ENCODE measurements at regions of chr1 and their contacts with region 1.

Region 1: GRCh38 chr1:160437432-160438316 is 37.3 kb downstream of the VANGL2 start:
- DNase-seq: peak in 4 of 9 experiments; percentile 14 to 81 (median 62)
- ATAC-seq: peak; percentile 82
- H3K4me3 ChIP-seq: peak overlapping the region; percentile 43 to 49
- H3K4me3 Mint-ChIP-seq: peak overlapping the region; percentile 78
- H3K27ac ChIP-seq: peak overlapping the region; percentile 59 to 96
- H3K27ac Mint-ChIP-seq: peak overlapping the region; percentile 98
- H3K4me1 ChIP-seq: peaks cover 22% of the 10 kb centered on the region
- H3K4me1 Mint-ChIP-seq: peaks cover 43% of the 10 kb centered on the region
- H3K27me3 ChIP-seq: no peaks in the 10 kb centered on the region
- H3K27me3 Mint-ChIP-seq: no peaks in the 10 kb centered on the region
- CTCF ChIP-seq: no peak

Region 2: GRCh38 chr1:158972841-158973240 is 1464.8 kb before region 1 on chr1:
- CTCF ChIA-PET with region 1: no interaction called
- POLR2A ChIA-PET with region 1: no interaction called
- intact Hi-C with region 1: no loop called
- DNase-seq: peak in 2 of 9 experiments; percentile 31 to 47
- ATAC-seq: no peak
- H3K4me3 ChIP-seq: no peak overlapping the region
- H3K4me3 Mint-ChIP-seq: no peak overlapping the region
- H3K27ac ChIP-seq: peak overlapping the region in 1 of 2 experiments; percentile 1
- H3K27ac Mint-ChIP-seq: no peak overlapping the region
- H3K4me1 ChIP-seq: no peaks in the 10 kb centered on the region
- H3K4me1 Mint-ChIP-seq: peaks cover 3% of the 10 kb centered on the region
- H3K27me3 ChIP-seq: no peaks in the 10 kb centered on the region
- H3K27me3 Mint-ChIP-seq: no peaks in the 10 kb centered on the region
- CTCF ChIP-seq: no peak

Region 3: GRCh38 chr1:160460683-160461287 is 23.1 kb after region 1 on chr1:
- CTCF ChIA-PET with region 1: no interaction called
- POLR2A ChIA-PET with region 1: no interaction called
- intact Hi-C with region 1: loop called in 1 of 2 experiments (anchors 2 kb)
- DNase-seq: peak in 1 of 9 experiments; percentile 33
- ATAC-seq: peak; percentile 14
- H3K4me3 ChIP-seq: no peak overlapping the region
- H3K4me3 Mint-ChIP-seq: peak overlapping the region; percentile 54
- H3K27ac ChIP-seq: peak overlapping the region in 1 of 2 experiments; percentile 40
- H3K27ac Mint-ChIP-seq: peak overlapping the region; percentile 82
- H3K4me1 ChIP-seq: peaks cover 14% of the 10 kb centered on the region
- H3K4me1 Mint-ChIP-seq: peaks cover 47% of the 10 kb centered on the region
- H3K27me3 ChIP-seq: no peaks in the 10 kb centered on the region
- H3K27me3 Mint-ChIP-seq: no peaks in the 10 kb centered on the region
- CTCF ChIP-seq: no peak

Region 4: DNA sequence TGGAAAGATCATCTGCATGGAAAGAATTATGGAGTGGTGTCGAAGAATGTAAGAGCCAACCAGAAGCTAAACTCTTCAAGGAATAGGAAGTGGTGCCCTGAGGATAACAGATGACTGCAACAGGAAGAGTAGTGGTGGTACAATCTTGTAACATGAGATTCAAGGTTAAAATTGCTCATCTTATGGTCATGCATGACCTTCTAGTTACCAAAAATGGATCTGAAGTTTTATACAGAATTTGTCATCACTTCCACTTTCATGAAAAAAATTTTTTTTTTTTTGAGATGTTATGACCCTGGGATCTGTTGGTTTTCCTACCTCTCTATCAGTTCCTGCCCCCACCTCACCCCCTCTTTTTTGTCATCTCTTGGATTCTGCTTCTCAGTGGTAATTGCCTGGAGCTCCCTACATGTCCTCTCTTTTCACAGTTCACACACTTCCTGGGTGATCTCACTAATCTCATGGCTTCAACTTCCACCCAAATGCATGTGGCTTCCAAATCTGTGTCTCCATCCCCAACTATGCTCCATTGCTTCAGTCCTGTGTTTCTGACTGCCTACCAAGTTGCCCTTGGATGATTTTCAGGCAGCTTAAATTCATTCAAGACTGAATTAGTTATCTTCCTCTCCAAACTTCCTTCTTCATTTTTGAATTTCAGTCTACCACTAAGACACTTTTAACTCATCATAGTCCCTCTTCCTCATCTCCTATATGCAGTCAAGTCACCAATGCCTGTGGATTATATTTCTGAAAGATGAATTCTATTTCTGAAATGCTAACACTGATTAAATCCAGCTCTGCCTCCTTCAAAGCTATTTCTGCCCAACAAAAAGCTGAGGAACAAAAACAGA is 36.9 kb after region 1 on chr1:
- CTCF ChIA-PET with region 1: interaction called, 3 read pairs
- POLR2A ChIA-PET with region 1: no interaction called
- intact Hi-C with region 1: loop called in 1 of 2 experiments (anchors 5 kb)
- DNase-seq: no peak
- ATAC-seq: peak; percentile 20
- H3K4me3 ChIP-seq: no peak overlapping the region
- H3K4me3 Mint-ChIP-seq: no peak overlapping the region
- H3K27ac ChIP-seq: no peak overlapping the region
- H3K27ac Mint-ChIP-seq: no peak overlapping the region
- H3K4me1 ChIP-seq: peaks cover 18% of the 10 kb centered on the region
- H3K4me1 Mint-ChIP-seq: peaks cover 7% of the 10 kb centered on the region
- H3K27me3 ChIP-seq: no peaks in the 10 kb centered on the region
- H3K27me3 Mint-ChIP-seq: no peaks in the 10 kb centered on the region
- CTCF ChIP-seq: no peak

Region 5: GRCh38 chr1:160483505-160484185 is 46.0 kb after region 1 on chr1:
- CTCF ChIA-PET with region 1: interaction called, 3 read pairs
- POLR2A ChIA-PET with region 1: no interaction called
- intact Hi-C with region 1: loop called in 1 of 2 experiments (anchors 5 kb)
- DNase-seq: no peak
- ATAC-seq: no peak
- H3K4me3 ChIP-seq: no peak overlapping the region
- H3K4me3 Mint-ChIP-seq: no peak overlapping the region
- H3K27ac ChIP-seq: peak overlapping the region in 1 of 2 experiments; percentile 36
- H3K27ac Mint-ChIP-seq: peak overlapping the region; percentile 79
- H3K4me1 ChIP-seq: peaks cover 25% of the 10 kb centered on the region
- H3K4me1 Mint-ChIP-seq: peaks cover 55% of the 10 kb centered on the region
- H3K27me3 ChIP-seq: no peaks in the 10 kb centered on the region
- H3K27me3 Mint-ChIP-seq: no peaks in the 10 kb centered on the region
- CTCF ChIP-seq: no peak

Region 6: GRCh38 chr1:160494620-160495019 is 56.9 kb after region 1 on chr1:
- CTCF ChIA-PET with region 1: no interaction called
- POLR2A ChIA-PET with region 1: no interaction called
- intact Hi-C with region 1: no loop called
- DNase-seq: peak in 2 of 9 experiments; percentile 29 to 31
- ATAC-seq: no peak
- H3K4me3 ChIP-seq: no peak overlapping the region
- H3K4me3 Mint-ChIP-seq: no peak overlapping the region
- H3K27ac ChIP-seq: no peak overlapping the region
- H3K27ac Mint-ChIP-seq: no peak overlapping the region
- H3K4me1 ChIP-seq: no peaks in the 10 kb centered on the region
- H3K4me1 Mint-ChIP-seq: peaks cover 36% of the 10 kb centered on the region
- H3K27me3 ChIP-seq: no peaks in the 10 kb centered on the region
- H3K27me3 Mint-ChIP-seq: no peaks in the 10 kb centered on the region
- CTCF ChIP-seq: no peak

Measured in CD8-positive, alpha-beta T cell (primary cell).